ENCODE measurements at regions of chr17 and their contacts with region 1.

Region 1: DNA sequence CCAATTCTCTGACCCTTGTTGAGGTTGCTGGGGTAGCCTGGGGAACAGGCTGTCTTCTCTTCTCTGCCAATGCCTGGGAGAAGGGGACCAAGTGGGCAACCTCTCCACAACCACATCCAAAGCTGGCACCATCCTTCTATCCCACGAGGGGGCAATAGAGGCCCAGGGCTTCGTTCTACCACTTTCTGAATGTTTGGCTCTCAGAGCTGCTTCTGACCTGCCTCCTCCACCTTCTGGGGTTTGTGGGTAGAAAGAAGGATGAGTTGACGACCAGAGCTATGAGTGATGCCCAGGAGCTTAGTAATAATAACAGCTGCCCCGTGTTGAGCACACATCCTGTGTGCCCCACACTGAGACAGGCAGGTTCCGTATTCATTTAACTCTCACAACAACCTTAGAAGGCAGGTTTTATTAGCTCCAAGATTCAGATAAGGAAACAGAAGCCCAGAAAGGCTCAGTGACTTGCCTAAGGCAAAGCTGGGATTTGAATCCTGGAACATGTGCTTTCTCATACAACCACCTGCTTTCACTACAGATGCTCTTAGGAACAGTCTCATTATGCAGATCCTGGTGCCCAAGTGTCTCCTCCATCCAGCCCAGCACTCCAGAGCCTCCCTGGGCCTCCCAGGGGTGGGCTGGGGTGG is 11.1 kb downstream of the TSPOAP1 start:
- DNase-seq: peak; percentile 79
- CTCF ChIP-seq: peak; percentile 77

Region 2: DNA sequence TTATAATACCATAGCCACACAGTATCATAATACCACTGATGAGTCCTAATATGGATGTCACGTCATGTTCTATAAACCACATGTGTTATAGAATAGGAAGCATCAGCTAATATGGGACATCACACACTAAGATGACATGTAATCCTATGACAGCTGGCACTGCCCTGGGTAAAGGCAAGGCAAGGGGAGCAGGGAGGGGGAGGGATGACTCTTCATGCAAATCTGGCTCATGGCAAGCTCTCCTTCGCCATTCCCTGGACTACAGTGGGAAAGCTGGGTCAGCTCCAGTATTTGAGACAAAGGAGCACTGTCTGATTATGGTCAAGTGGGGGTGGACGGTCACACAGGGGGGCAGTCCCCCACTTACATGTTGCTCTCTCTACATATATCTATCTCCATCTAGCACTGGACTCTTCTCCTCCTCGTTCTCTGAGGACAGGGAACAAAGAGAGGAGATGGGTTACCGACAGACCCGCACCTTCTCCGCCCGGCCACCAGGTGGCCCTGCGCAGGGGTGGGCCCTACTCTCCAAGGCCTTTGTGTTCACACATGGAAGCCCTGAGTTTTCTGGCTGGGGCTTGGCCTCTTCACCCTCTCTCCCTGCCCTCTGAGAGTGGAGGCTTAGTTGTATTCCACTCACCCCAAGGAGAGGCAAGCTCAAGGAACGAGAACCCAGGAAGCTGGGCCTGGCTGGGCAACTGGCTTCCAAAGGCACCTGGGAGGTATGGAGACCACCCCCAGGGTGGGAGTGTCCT is 13.4 kb before region 1 on chr17:
- CTCF ChIA-PET with region 1: interaction called, 68 read pairs
- POLR2A ChIA-PET with region 1: interaction called, 3 read pairs
- DNase-seq: peak; percentile 91
- CTCF ChIP-seq: peak; percentile 79

Region 3: DNA sequence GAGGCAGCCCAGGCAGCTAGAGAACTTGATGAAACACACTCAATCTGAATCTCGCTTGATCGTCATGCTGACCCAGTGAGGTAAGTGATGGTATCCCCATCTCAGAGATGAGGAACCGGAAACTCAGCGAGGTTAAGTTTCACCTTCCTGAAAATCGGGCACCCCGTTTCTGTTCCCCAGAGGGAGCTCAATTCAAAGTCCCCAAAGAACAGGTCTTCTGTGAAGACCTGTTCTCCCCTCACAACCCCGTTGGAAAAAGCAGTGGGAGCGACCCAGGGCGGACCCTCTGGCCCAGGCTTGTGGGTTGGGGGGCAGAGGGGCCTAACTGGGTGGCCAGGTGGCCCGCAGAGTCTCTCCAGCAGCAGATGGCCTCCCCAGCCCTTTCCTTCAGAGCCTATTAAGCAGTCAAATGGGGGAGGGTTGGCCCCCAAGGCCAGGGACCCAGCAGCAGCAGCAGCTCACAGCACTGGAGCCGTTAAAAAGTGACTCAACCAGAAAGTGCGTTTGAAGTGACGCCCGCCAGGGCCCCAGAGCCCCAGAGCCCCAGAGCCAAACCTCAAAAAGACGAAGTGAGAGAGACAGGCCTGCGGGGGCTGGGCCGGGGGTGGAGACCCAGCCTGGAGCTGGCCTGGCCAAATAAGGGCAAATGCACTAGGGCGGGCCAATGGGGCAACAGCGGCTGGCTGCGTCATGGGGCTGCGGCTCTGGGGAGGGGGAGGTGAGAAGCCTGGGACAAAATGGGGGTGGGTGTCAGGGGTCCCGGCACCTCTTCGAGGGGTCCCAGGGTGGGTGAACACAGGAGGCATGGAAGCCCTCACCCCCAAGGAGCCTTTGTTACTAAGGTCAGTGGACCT is 20.3 kb after region 1 on chr17:
- CTCF ChIA-PET with region 1: interaction called, 50 read pairs
- POLR2A ChIA-PET with region 1: interaction called, 3 read pairs
- DNase-seq: peak; percentile 82
- CTCF ChIP-seq: no peak

Region 4: DNA sequence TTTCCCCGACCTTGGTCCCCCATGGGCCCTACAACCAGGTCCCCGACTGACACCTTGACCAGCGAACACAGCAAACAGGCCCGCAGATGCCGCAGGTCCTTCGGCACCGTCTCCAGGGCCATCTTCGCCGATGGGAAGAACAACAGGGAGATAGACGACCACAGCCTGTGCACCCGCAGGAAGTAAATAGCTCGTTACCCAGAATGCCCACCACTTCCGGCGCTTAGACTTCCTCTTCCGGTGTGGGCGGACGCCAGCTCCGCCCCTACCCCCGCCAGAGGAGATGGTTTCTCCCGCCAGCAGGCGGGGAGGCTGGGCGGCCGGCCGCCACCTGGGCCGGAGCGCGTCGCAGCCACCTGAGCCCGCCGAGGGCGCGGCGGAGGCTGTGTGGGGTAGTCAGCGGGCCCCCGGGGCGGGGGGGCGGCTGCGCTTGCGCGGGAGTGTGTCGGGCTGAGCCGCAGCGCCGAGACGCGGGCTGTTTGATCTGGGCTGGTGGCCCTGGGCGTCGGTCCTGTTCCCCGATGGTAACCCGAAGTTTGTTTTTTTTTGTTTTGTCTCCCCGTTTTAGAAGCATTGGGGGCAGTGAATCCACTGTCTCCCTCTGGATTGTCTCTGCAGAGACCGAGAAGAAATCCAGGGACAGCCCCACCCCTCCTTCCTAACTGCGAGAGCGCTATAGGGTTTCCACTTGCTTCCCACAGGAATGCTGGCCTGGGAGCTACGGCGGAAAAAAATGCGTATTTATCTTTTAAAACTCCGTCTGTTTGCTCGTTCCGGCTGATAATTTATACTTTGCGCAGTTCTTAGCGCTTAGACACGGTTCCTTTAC is 34.7 kb after region 1 on chr17 and contains the start of gene SUPT4H1:
- CTCF ChIA-PET with region 1: interaction called, 31 read pairs
- POLR2A ChIA-PET with region 1: interaction called, 13 read pairs
- DNase-seq: peak; percentile 94
- CTCF ChIP-seq: no peak

Region 5: GRCh38 chr17:58403311-58403710 is 85.8 kb after region 1 on chr17:
- CTCF ChIA-PET with region 1: no interaction called
- POLR2A ChIA-PET with region 1: no interaction called
- DNase-seq: no peak
- CTCF ChIP-seq: no peak

Region 6: GRCh38 chr17:58447039-58447975 is 129.8 kb after region 1 on chr17:
- CTCF ChIA-PET with region 1: interaction called, 57 read pairs
- POLR2A ChIA-PET with region 1: no interaction called
- DNase-seq: peak; percentile 70
- CTCF ChIP-seq: peak; percentile 89

Region 7: DNA sequence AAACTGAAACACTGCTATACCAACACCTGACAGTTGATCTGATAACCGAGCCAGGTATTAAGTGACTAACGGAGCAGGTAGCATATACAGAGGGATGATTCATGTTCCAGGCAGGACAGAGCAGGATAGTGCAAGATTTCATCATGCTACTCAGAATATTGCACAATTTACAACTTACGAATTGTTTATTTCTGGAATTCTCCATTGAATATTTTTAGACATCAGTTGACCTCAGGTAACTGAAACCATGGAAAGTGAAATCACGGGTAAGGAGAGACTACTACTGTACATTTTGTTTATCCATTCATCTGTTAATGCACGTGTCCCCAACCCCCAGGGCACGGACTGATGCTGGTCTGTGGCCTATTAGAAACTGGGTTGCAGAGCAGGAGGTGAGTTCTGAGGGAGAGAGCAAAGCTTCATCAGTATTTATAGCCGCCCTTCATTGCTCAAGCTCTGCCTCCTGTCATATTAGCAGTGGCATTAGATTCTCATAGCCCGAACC is 423.6 kb after region 1 on chr17:
- CTCF ChIA-PET with region 1: no interaction called
- POLR2A ChIA-PET with region 1: no interaction called
- DNase-seq: no peak
- CTCF ChIP-seq: no peak